Aorta (tissue), 5 donors: ENCODE measurements at regions of chr1 and their contacts with region 1.

Region 1: DNA sequence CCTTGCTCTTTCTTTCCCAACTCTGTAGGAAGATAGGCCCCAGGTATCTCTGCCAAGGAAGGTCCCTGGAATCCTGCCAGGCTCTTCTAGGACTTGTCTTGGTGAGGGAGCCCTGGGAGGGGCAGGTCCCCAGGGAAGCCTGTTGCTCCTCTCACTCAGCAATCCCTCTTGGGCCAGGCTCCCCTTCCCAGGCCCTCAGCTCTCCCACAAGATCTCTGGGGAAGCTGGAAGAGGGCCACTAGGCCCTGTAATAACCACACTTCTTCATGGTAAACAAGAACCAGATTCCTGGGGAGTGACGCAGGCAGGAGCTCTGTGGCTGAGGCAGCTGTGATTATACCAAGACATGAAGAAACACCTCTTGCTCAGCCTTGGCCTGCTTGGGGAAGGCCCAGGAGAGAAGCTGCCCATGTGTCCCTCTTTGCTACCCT is 9.9 kb upstream of the MAPKAPK2 start:
- DNase-seq: peak; percentile 86 to 89
- ATAC-seq: peak; percentile 78
- H3K4me3 ChIP-seq: no peak overlapping the region
- H3K27ac ChIP-seq: peak overlapping the region in 1 of 2 donors; percentile 79
- H3K4me1 ChIP-seq: no peaks in the 10 kb centered on the region
- H3K27me3 ChIP-seq: no peaks in the 10 kb centered on the region

Region 2: DNA sequence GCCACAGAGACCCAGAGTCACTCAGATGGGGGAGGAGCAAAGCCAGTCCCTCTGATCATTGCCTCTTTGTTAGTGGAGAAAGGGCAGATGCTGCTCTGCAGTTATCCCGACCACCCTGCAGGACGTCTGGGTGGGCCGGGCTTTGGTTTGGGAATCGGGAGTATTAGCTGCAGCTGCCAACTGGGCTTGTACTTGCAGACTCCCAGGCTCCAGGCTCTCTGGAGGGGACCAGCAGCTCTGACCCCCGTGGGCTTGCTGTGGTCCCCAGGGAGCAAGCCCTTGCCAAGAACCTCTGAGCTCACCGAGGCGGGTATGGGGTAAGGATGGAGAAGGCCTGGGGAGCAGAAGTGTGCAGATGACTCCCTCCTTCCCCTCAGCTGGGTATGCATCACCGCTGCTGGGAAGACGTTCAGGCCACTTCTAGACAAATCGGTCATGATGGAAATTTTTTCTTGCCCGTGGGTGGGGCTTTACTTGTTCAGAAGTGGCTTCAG is 31.6 kb after region 1 on chr1:
- intact Hi-C with region 1: loop called in 1 of 2 experiments (anchors 1 kb)
- DNase-seq: peak; percentile 93 to 94
- ATAC-seq: peak; percentile 79
- H3K4me3 ChIP-seq: no peak overlapping the region
- H3K27ac ChIP-seq: peak overlapping the region in 1 of 2 donors; percentile 69
- H3K4me1 ChIP-seq: peaks cover 0 to 23% of the 10 kb centered on the region in 2 donors
- H3K27me3 ChIP-seq: no peaks in the 10 kb centered on the region

Region 3: GRCh38 chr1:206992790-206993189 is 318.0 kb after region 1 on chr1:
- intact Hi-C with region 1: no loop called
- DNase-seq: no peak
- ATAC-seq: no peak
- H3K4me3 ChIP-seq: no peak overlapping the region
- H3K27ac ChIP-seq: no peak overlapping the region
- H3K4me1 ChIP-seq: no peaks in the 10 kb centered on the region
- H3K27me3 ChIP-seq: peaks cover 0 to 1% of the 10 kb centered on the region in 2 donors